CD8-positive, alpha-beta memory T cell (primary cell): ENCODE measurements at regions of chr13 and their contacts with region 1.

Region 1: GRCh38 chr13:42354241-42355091 is 82.5 kb downstream of the AKAP11 start:
- DNase-seq: peak in 2 of 5 donors; percentile 24 to 59
- H3K4me3 ChIP-seq: peak overlapping the region; percentile 28
- H3K4me3 Mint-ChIP-seq: peak overlapping the region in 6 of 7 donors; percentile 43 to 69 (median 57)
- H3K27ac ChIP-seq: no peak overlapping the region
- H3K27ac Mint-ChIP-seq: peak overlapping the region; percentile 69 to 95 (median 92)
- H3K4me1 ChIP-seq: peaks cover 29% of the 10 kb centered on the region
- H3K4me1 Mint-ChIP-seq: peaks cover 23 to 42% (median 27%) of the 10 kb centered on the region in 3 donors
- H3K27me3 ChIP-seq: no peaks in the 10 kb centered on the region
- H3K27me3 Mint-ChIP-seq: no peaks in the 10 kb centered on the region

Region 2: GRCh38 chr13:42305503-42305902 is 49.0 kb before region 1 on chr13:
- CTCF ChIA-PET with region 1: no interaction called
- POLR2A ChIA-PET with region 1: no interaction called
- DNase-seq: no peak
- H3K4me3 ChIP-seq: no peak overlapping the region
- H3K4me3 Mint-ChIP-seq: no peak overlapping the region
- H3K27ac ChIP-seq: no peak overlapping the region
- H3K27ac Mint-ChIP-seq: peak overlapping the region in 2 of 8 donors; percentile 6 to 14
- H3K4me1 ChIP-seq: no peaks in the 10 kb centered on the region
- H3K4me1 Mint-ChIP-seq: peaks cover 17 to 41% (median 37%) of the 10 kb centered on the region in 3 donors
- H3K27me3 ChIP-seq: no peaks in the 10 kb centered on the region
- H3K27me3 Mint-ChIP-seq: no peaks in the 10 kb centered on the region

Region 3: DNA sequence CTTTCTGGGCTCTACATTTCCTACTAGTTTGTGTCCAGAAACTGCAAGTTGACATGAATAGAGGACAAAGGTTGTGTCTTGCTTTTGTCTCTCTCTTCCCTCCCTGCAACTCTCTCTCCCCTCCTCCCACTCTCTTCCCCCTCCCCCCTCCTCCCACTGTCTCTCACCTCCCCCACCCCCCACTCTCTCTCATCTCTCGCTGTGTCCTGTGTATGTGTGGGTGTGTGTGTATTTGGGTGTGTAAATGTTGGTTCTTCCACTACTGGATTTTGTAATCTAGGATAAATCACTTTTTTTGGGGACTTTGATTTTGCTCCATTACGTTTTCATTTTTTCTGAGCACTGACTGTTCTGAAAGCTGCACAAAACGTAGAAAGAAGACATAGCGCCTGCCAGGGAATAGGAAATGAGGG is 34.1 kb before region 1 on chr13:
- CTCF ChIA-PET with region 1: no interaction called
- POLR2A ChIA-PET with region 1: no interaction called
- DNase-seq: no peak
- H3K4me3 ChIP-seq: no peak overlapping the region
- H3K4me3 Mint-ChIP-seq: peak overlapping the region in 4 of 7 donors; percentile 18 to 59 (median 41)
- H3K27ac ChIP-seq: no peak overlapping the region
- H3K27ac Mint-ChIP-seq: peak overlapping the region in 3 of 8 donors; percentile 1 to 68 (median 11)
- H3K4me1 ChIP-seq: peaks cover 5% of the 10 kb centered on the region
- H3K4me1 Mint-ChIP-seq: peaks cover 20 to 29% (median 21%) of the 10 kb centered on the region in 3 donors
- H3K27me3 ChIP-seq: no peaks in the 10 kb centered on the region
- H3K27me3 Mint-ChIP-seq: peaks cover 0 to 1% of the 10 kb centered on the region in 2 donors

Region 4: GRCh38 chr13:42364613-42365000 is 10.1 kb after region 1 on chr13:
- CTCF ChIA-PET with region 1: no interaction called
- POLR2A ChIA-PET with region 1: no interaction called
- DNase-seq: no peak
- H3K4me3 ChIP-seq: no peak overlapping the region
- H3K4me3 Mint-ChIP-seq: no peak overlapping the region
- H3K27ac ChIP-seq: no peak overlapping the region
- H3K27ac Mint-ChIP-seq: no peak overlapping the region
- H3K4me1 ChIP-seq: peaks cover 11% of the 10 kb centered on the region
- H3K4me1 Mint-ChIP-seq: peaks cover 11 to 24% (median 15%) of the 10 kb centered on the region in 3 donors
- H3K27me3 ChIP-seq: no peaks in the 10 kb centered on the region
- H3K27me3 Mint-ChIP-seq: peaks cover 0 to 2% of the 10 kb centered on the region in 2 donors

Region 5: DNA sequence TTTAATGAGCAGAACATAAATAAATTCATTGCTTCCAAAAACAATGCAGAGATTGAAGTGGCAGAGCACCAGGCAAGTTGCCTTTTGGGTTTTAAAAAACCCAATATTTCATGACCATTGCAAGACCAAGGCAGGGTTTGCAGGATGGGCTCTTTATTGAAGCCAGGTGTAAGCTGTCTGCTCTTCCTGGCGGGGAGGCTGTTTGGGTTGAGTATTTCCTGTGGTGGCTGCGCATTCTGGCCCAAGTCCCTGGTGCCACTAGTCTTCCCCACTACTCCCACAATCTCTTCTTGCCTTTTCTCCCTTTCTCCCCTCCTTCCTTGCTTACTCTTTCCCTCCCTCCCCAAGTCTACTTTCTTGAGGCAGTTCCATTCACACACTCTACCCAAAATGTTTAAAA is 33.9 kb after region 1 on chr13:
- CTCF ChIA-PET with region 1: interaction called, 4 read pairs
- POLR2A ChIA-PET with region 1: interaction called, 19 read pairs
- DNase-seq: no peak
- H3K4me3 ChIP-seq: no peak overlapping the region
- H3K4me3 Mint-ChIP-seq: peak overlapping the region in 2 of 7 donors; percentile 5 to 41
- H3K27ac ChIP-seq: no peak overlapping the region
- H3K27ac Mint-ChIP-seq: peak overlapping the region in 5 of 8 donors; percentile 27 to 56 (median 43)
- H3K4me1 ChIP-seq: peaks cover 31% of the 10 kb centered on the region
- H3K4me1 Mint-ChIP-seq: peaks cover 45 to 51% (median 50%) of the 10 kb centered on the region in 3 donors
- H3K27me3 ChIP-seq: no peaks in the 10 kb centered on the region
- H3K27me3 Mint-ChIP-seq: no peaks in the 10 kb centered on the region